Activated CD4-positive, alpha-beta memory T cell treated with anti-CD3 and anti-CD28 coated beads, Interleukin-2, amount 10 ng/mL, durations not matched to agents 7 days and 5 days (primary cell): ENCODE measurements at regions of chr5 and their contacts with region 1.

Region 1: DNA sequence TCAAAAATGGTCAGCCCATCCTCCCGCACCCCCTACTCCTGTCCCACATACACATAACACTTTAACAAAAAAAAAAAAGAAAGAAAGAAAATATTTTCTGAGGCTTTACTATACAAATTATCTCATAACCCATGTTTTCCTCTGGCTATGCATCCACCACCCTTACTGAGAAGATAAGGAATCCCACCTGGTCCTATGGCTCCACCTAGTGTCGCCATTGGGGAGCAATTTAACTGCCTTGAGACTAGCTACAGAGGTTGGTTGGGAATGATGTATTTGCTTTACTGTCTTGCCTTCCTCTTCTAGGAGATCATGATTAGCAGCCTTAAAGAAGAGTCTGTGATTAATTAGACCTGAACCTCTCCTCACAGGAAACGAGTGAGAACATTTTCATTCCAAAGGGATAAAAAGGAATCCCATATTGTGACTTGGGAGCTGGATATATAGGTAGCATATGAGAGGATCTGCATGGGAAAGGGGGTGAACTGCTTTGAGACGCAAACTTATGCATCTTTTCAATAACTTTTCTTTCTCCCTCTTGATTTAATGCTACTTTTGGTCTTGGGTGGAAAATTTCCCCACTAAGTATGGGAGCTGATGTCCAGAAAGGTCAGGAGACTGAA is 77.7 kb upstream of the SELENOP start:
- DNase-seq: peak; percentile 75
- H3K4me3 Mint-ChIP-seq: no peak overlapping the region
- H3K27ac Mint-ChIP-seq: no peak overlapping the region
- H3K4me1 Mint-ChIP-seq: no peaks in the 10 kb centered on the region
- H3K27me3 Mint-ChIP-seq: peaks cover 15% of the 10 kb centered on the region

Region 2: GRCh38 chr5:42851441-42851840 is 38.0 kb before region 1 on chr5:
- CTCF ChIA-PET with region 1: no interaction called
- POLR2A ChIA-PET with region 1: no interaction called
- DNase-seq: no peak
- H3K4me3 Mint-ChIP-seq: no peak overlapping the region
- H3K27ac Mint-ChIP-seq: no peak overlapping the region
- H3K4me1 Mint-ChIP-seq: peaks cover 6% of the 10 kb centered on the region
- H3K27me3 Mint-ChIP-seq: peaks cover 4% of the 10 kb centered on the region

Region 3: DNA sequence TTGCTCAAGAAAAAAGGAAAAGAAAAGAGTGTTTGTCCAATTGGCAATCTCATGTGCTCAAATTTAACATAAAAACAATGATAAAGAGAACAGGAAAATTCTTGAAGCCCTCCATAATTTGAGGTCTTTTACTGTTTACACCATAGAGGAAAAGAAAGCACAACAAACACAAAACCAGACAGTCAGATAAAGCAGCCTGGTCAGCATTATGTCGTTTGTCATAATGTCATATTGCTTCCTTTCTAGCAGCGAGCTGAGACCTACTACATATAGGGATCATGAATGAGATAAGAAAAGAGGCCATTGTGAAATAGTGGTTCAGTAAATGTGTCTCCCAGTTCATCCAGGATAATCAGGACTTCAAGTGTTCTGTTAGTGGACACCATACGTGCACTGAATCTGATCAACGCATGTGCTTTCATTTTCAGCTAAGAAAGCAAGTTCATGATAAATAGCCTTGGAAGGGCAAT is 13.0 kb before region 1 on chr5:
- CTCF ChIA-PET with region 1: interaction called, 12 read pairs
- POLR2A ChIA-PET with region 1: no interaction called
- DNase-seq: no peak
- H3K4me3 Mint-ChIP-seq: no peak overlapping the region
- H3K27ac Mint-ChIP-seq: no peak overlapping the region
- H3K4me1 Mint-ChIP-seq: peaks cover 10% of the 10 kb centered on the region
- H3K27me3 Mint-ChIP-seq: peaks cover 7% of the 10 kb centered on the region

Region 4: GRCh38 chr5:42943931-42944631 is 54.7 kb after region 1 on chr5:
- CTCF ChIA-PET with region 1: no interaction called
- POLR2A ChIA-PET with region 1: no interaction called
- DNase-seq: no peak
- H3K4me3 Mint-ChIP-seq: no peak overlapping the region
- H3K27ac Mint-ChIP-seq: no peak overlapping the region
- H3K4me1 Mint-ChIP-seq: peaks cover 8% of the 10 kb centered on the region
- H3K27me3 Mint-ChIP-seq: peaks cover 3% of the 10 kb centered on the region

Region 5: DNA sequence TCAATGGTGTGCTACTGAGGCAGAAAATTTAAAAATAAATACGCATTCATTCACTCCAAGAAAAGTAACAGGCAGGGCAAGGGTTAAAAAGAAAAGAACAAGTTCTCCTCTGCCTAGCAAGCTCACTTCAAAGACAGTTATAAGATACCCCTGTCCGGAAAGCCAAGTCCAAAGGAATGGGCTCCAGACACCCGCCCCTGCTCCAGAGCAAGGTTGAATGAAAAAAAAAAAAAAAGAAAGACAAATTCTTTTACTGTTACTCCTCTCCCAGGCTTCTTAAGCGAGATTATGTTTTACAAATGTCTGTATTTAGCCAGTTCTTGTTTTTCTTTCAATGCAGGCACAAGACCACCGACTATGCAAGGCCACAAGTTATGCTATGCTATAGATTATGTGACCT is 159.8 kb after region 1 on chr5:
- CTCF ChIA-PET with region 1: no interaction called
- POLR2A ChIA-PET with region 1: no interaction called
- DNase-seq: no peak
- H3K4me3 Mint-ChIP-seq: no peak overlapping the region
- H3K27ac Mint-ChIP-seq: no peak overlapping the region
- H3K4me1 Mint-ChIP-seq: peaks cover 20% of the 10 kb centered on the region
- H3K27me3 Mint-ChIP-seq: no peaks in the 10 kb centered on the region

Region 6: GRCh38 chr5:43244823-43245565 is 355.6 kb after region 1 on chr5:
- CTCF ChIA-PET with region 1: no interaction called
- POLR2A ChIA-PET with region 1: no interaction called
- DNase-seq: no peak
- H3K4me3 Mint-ChIP-seq: no peak overlapping the region
- H3K27ac Mint-ChIP-seq: no peak overlapping the region
- H3K4me1 Mint-ChIP-seq: peaks cover 28% of the 10 kb centered on the region
- H3K27me3 Mint-ChIP-seq: peaks cover 13% of the 10 kb centered on the region